Posterior cingulate gyrus (tissue), 11 donors: ENCODE measurements at regions of chr12 and their contacts with region 1.

Region 1: GRCh38 chr12:3073438-3074250 is 3.5 kb upstream of the TSPAN9 start:
- DNase-seq: peak; percentile 74 to 98 (median 88)

Region 2: DNA sequence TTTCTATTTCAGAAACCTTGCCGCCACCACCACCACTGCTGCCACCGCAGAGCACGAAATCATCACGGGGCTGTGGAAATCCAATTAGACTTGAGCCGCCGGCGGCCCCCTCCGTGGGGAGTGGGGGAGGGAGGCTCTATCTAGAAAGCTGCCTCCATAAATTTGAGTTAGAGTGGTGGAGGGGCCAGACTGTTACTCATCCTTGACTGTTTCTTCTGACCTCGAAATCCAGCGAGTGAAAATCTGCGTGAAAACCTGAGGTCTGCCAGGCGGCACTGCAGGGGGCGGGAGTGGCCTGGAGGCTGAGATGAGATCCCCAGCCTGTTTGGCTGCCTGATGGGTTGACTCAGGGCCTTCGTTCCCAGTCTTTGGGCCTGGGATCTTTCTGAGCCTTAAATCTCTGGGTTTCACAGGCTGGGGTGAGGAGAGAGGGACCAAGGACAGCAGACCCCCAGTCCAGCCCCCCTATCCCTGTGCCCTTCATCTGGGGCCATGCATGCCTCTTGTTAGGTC is 33.5 kb after region 1 on chr12:
- intact Hi-C with region 1: no loop called
- DNase-seq: peak in 2 of 10 donors; percentile 27 to 83

Region 3: DNA sequence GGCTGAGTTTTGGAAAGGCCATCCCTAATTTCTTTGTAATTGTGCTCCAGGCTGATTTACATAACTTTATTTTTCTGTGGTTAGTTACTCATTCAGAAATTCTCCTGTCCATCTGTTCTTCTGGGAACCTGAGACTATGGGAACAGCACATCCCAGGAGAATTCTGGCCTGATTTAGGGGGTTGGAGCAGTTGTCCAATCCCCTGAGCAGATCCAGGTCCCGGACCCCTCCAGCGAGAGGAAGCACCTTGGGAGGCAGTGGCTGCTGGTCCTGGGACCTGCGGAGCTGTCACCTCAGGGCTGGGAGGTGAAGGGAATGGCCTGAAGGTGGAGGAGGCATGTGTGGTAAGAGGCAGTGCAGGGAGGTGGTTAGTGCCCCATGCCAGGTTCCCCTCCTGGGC is 44.0 kb after region 1 on chr12:
- intact Hi-C with region 1: no loop called
- DNase-seq: peak in 1 of 10 donors; percentile 49

Region 4: GRCh38 chr12:3202734-3203446 is 129.2 kb after region 1 on chr12:
- intact Hi-C with region 1: loop called (anchors 10 kb)
- DNase-seq: peak in 8 of 10 donors; percentile 32 to 82 (median 59)

Region 5: DNA sequence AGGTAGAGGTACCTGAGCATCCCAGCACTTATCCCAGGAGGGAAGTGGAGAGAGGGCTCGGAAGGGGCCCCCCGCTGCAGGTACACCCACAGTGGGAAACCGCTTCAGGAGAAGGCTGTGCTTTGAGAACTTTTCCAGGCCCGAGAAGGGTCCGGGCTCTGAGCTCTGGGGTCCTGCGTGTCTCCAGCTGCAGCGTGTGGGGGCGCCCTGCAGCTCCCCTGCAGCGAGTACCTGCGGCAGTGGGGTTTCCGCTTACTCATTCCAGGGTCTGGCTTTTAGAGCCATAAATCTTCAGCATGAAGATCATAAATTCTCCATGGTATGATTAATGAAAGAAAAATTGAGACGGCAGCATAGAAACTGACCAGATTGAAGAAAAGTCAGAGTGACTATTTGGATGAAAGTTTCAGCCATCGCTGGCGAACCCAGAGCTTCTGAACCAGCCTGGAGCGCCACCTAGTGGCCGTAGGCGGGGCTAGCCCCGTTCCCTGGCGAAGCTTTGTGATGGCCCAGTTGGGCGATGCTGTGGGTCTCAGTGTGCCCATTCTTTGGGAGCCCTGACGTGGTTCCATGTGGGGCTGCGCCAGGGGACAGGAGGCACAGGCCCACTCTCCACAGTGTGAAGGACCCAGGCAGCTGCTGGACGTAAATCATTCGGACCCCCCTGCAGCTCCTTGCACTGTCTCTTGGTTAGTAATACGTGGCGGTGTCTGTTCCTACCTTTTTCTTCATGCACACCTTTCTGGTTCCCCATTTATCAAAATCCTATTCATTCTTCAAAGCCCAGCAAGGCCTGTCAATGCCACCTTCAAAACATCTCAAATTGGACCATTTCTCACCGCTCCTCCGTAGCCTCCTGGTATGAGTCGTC is 201.8 kb after region 1 on chr12:
- intact Hi-C with region 1: loop called (anchors 1 kb)
- DNase-seq: peak; percentile 55 to 97 (median 82)